Lower leg skin (tissue), 4 donors: ENCODE measurements at regions of chr5 and their contacts with region 1.

Region 1: DNA sequence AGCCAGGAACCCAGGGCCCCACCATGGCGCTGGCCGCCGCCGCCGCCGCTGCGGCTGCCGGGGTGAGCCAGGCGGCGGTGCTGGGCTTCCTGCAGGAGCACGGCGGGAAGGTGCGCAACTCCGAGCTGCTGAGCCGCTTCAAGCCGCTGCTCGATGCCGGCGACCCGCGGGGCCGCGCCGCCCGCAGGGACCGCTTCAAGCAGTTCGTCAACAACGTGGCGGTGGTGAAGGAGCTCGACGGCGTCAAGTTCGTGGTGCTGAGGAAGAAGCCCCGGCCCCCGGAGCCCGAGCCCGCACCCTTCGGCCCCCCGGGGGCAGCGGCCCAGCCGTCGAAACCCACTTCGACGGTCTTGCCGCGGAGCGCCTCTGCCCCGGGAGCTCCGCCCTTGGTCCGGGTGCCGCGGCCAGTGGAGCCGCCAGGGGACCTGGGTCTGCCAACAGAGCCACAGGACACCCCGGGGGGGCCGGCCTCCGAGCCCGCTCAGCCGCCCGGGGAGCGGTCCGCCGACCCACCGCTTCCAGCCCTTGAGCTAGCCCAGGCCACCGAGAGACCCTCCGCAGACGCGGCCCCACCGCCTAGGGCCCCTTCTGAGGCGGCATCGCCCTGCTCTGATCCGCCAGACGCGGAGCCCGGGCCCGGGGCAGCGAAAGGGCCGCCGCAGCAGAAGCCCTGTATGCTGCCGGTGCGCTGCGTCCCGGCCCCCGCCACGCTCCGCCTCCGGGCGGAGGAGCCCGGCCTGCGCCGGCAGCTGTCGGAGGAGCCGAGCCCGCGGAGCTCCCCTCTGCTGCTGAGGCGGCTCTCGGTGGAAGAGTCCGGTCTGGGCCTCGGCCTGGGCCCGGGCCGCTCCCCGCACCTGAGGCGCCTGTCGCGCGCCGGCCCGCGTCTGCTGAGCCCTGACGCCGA is 749 bp downstream of the SOWAHA start:
- DNase-seq: peak in 1 of 2 donors; percentile 83
- H3K4me3 ChIP-seq: no peak overlapping the region
- CTCF ChIP-seq: no peak
- POLR2A ChIP-seq: no peak

Region 2: DNA sequence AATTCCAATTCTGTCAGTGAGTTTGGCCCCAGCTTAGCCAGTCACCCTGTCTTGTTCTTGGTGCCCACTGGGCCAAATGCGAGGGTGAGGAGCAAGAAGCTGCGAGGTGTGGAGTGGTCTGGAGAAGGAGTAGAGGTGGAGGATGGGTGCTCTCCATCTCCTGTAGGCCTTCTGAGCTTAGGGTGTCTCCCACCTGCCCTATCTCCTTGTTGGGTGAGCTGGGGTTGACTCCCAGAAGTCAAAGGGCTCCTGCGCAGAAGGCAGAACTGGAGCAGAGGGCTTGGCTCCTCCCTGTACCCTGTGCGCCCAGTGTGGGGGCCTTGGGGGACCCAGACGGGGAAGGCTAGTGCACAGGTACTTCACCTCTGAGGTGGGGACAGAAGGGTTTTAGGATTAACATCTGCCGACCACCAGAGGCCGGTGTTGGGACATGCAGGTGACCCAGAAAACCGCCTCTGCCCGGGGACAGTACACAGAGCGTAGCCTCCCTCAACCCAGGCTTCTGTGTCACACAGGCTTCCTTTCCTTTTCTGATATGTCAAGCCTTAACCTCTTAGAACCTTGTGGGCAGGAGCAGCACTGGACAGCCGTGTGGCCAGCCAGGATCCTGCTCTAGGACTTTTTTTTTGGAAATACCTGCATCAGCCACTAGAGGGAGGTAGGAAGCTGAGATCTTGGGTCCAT is 287.4 kb before region 1 on chr5:
- intact Hi-C with region 1: loop called (anchors 10 kb)
- DNase-seq: peak in 1 of 2 donors; percentile 24
- H3K4me3 ChIP-seq: no peak overlapping the region
- CTCF ChIP-seq: peak in 1 of 3 donors; percentile 35
- POLR2A ChIP-seq: no peak

Region 3: DNA sequence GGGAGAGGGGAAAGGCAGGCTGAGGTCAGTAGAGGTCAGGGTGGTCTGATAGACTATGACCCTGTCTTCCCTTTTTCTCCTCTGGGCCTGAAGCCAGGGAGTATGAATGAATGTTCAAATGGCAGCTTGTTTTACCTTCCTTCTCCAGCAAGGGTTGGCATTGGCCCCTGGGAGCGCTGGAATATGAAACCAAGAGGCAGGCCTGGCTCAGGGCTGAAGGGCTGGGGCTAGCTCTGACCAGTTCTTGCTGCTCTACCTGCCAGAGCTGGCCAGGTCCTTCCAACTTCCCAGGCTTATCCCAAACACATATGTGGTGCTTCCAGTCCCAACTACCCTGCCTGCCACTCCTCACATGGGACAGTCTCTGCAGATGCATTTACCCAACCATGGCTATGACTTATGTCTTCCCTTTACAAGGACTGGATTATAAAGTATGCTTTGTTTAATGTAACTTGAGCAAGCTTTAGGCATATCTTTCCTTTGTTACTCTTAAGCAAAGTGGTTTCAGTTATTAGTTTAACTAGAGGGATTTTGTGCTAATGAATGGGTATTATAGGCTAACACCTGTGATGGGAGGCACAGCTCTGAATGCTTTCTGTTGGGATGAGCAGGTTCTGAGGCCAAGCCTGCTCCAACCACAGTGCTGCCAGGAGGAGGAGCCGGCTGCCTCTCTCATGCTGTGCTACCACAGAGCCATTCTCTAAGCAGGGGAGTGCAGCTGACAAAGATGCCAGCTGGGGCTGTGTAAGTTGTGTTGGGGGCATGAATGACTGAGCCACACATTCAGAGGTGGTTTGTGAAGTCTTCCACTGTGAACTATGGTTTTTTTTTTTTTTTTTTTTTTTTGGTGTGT is 60.5 kb before region 1 on chr5:
- intact Hi-C with region 1: loop called (anchors 10 kb)
- DNase-seq: peak in 1 of 2 donors; percentile 83
- H3K4me3 ChIP-seq: no peak overlapping the region
- CTCF ChIP-seq: no peak
- POLR2A ChIP-seq: no peak